BJ (cell line): ENCODE measurements at regions of chr11 and their contacts with region 1.

Region 1: GRCh38 chr11:69513663-69514224 is 32.3 kb downstream of the LINC01488 start:
- DNase-seq: no peak
- H3K4me3 ChIP-seq: no peak overlapping the region
- H3K27me3 ChIP-seq: no peaks in the 10 kb centered on the region
- CTCF ChIP-seq: no peak

Region 2: GRCh38 chr11:69356703-69357457 is 156.9 kb before region 1 on chr11:
- CTCF ChIA-PET with region 1: no interaction called
- POLR2A ChIA-PET with region 1: no interaction called
- DNase-seq: no peak
- H3K4me3 ChIP-seq: no peak overlapping the region
- H3K27me3 ChIP-seq: no peaks in the 10 kb centered on the region
- CTCF ChIP-seq: no peak

Region 3: DNA sequence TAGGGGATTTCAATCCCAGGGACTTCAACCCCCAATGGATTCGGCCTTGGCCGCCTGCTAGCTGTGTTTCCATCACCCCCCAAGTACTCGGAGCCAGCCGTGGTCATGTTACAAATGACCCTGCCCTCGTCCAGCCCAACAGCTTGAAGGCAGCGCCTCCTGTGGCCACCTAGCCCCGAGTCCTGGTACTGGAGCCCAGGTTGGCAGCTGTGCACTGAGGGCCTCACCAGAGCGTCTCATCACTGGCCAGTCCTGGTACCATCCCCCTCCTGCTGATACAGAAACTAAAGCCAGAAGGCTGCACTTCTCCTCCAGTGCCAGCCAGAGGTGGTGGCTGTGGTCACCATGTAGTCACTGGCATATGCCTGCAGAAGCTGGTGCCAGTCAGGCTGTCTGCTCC is 644.5 kb after region 1 on chr11:
- CTCF ChIA-PET with region 1: no interaction called
- POLR2A ChIA-PET with region 1: interaction called, 17 read pairs
- DNase-seq: no peak
- H3K4me3 ChIP-seq: no peak overlapping the region
- H3K27me3 ChIP-seq: peaks cover 3% of the 10 kb centered on the region
- CTCF ChIP-seq: peak; percentile 32; the same call in 1 of the 2 replicates